ENCODE measurements at regions of chr12 and their contacts with region 1.

Region 1: GRCh38 chr12:111396726-111397445 is 8.8 kb upstream of the SH2B3 start:
- DNase-seq: peak; percentile 91
- ATAC-seq: peak; percentile 91
- H3K4me3 ChIP-seq: peak overlapping the region in 4 of 5 experiments; percentile 22 to 56 (median 44)
- H3K4me3 Mint-ChIP-seq: peak overlapping the region; percentile 86
- H3K27ac ChIP-seq: no peak overlapping the region
- H3K27ac Mint-ChIP-seq: peak overlapping the region; percentile 63
- H3K4me1 ChIP-seq: peaks cover 6 to 24% of the 10 kb centered on the region in 2 donors
- H3K4me1 Mint-ChIP-seq: peaks cover 28% of the 10 kb centered on the region
- H3K27me3 ChIP-seq: no peaks in the 10 kb centered on the region
- H3K27me3 Mint-ChIP-seq: no peaks in the 10 kb centered on the region
- CTCF ChIP-seq: peak; percentile 99

Region 2: GRCh38 chr12:111010061-111010460 is 386.8 kb before region 1 on chr12:
- CTCF ChIA-PET with region 1: no interaction called
- POLR2A ChIA-PET with region 1: no interaction called
- intact Hi-C with region 1: no loop called
- DNase-seq: no peak
- ATAC-seq: no peak
- H3K4me3 ChIP-seq: no peak overlapping the region
- H3K4me3 Mint-ChIP-seq: no peak overlapping the region
- H3K27ac ChIP-seq: no peak overlapping the region
- H3K27ac Mint-ChIP-seq: no peak overlapping the region
- H3K4me1 ChIP-seq: no peaks in the 10 kb centered on the region
- H3K4me1 Mint-ChIP-seq: no peaks in the 10 kb centered on the region
- H3K27me3 ChIP-seq: peaks cover 0 to 15% (median 5%) of the 10 kb centered on the region in 4 experiments
- H3K27me3 Mint-ChIP-seq: peaks cover 58% of the 10 kb centered on the region
- CTCF ChIP-seq: no peak

Region 3: GRCh38 chr12:111086947-111087700 is 309.8 kb before region 1 on chr12:
- CTCF ChIA-PET with region 1: no interaction called
- POLR2A ChIA-PET with region 1: no interaction called
- intact Hi-C with region 1: no loop called
- DNase-seq: no peak
- ATAC-seq: no peak
- H3K4me3 ChIP-seq: no peak overlapping the region
- H3K4me3 Mint-ChIP-seq: no peak overlapping the region
- H3K27ac ChIP-seq: no peak overlapping the region
- H3K27ac Mint-ChIP-seq: no peak overlapping the region
- H3K4me1 ChIP-seq: peaks cover 6 to 10% of the 10 kb centered on the region in 2 donors
- H3K4me1 Mint-ChIP-seq: peaks cover 14% of the 10 kb centered on the region
- H3K27me3 ChIP-seq: no peaks in the 10 kb centered on the region
- H3K27me3 Mint-ChIP-seq: peaks cover 34% of the 10 kb centered on the region
- CTCF ChIP-seq: no peak

Region 4: GRCh38 chr12:111359231-111359913 is 37.5 kb before region 1 on chr12:
- CTCF ChIA-PET with region 1: interaction called, 23 read pairs
- POLR2A ChIA-PET with region 1: no interaction called
- intact Hi-C with region 1: no loop called
- DNase-seq: peak; percentile 6
- ATAC-seq: no peak
- H3K4me3 ChIP-seq: no peak overlapping the region
- H3K4me3 Mint-ChIP-seq: peak overlapping the region; percentile 84
- H3K27ac ChIP-seq: no peak overlapping the region
- H3K27ac Mint-ChIP-seq: peak overlapping the region; percentile 93
- H3K4me1 ChIP-seq: peaks cover 56 to 62% of the 10 kb centered on the region in 2 donors
- H3K4me1 Mint-ChIP-seq: peaks cover 67% of the 10 kb centered on the region
- H3K27me3 ChIP-seq: no peaks in the 10 kb centered on the region
- H3K27me3 Mint-ChIP-seq: no peaks in the 10 kb centered on the region
- CTCF ChIP-seq: no peak

Region 5: GRCh38 chr12:111384596-111384995 is 12.3 kb before region 1 on chr12:
- CTCF ChIA-PET with region 1: interaction called, 14 read pairs
- POLR2A ChIA-PET with region 1: no interaction called
- intact Hi-C with region 1: no loop called
- DNase-seq: no peak
- ATAC-seq: no peak
- H3K4me3 ChIP-seq: no peak overlapping the region
- H3K4me3 Mint-ChIP-seq: no peak overlapping the region
- H3K27ac ChIP-seq: no peak overlapping the region
- H3K27ac Mint-ChIP-seq: no peak overlapping the region
- H3K4me1 ChIP-seq: peaks cover 0 to 5% of the 10 kb centered on the region in 2 donors
- H3K4me1 Mint-ChIP-seq: peaks cover 7% of the 10 kb centered on the region
- H3K27me3 ChIP-seq: no peaks in the 10 kb centered on the region
- H3K27me3 Mint-ChIP-seq: no peaks in the 10 kb centered on the region
- CTCF ChIP-seq: no peak

Region 6: GRCh38 chr12:111482462-111482861 is 85.6 kb after region 1 on chr12:
- CTCF ChIA-PET with region 1: interaction called, 63 read pairs
- POLR2A ChIA-PET with region 1: no interaction called
- intact Hi-C with region 1: loop called (anchors 1 kb)
- DNase-seq: peak; percentile 16
- ATAC-seq: no peak
- H3K4me3 ChIP-seq: no peak overlapping the region
- H3K4me3 Mint-ChIP-seq: no peak overlapping the region
- H3K27ac ChIP-seq: no peak overlapping the region
- H3K27ac Mint-ChIP-seq: no peak overlapping the region
- H3K4me1 ChIP-seq: no peaks in the 10 kb centered on the region
- H3K4me1 Mint-ChIP-seq: no peaks in the 10 kb centered on the region
- H3K27me3 ChIP-seq: no peaks in the 10 kb centered on the region
- H3K27me3 Mint-ChIP-seq: no peaks in the 10 kb centered on the region
- CTCF ChIP-seq: peak; percentile 35

Measured in B cell (primary cell).